ENCODE measurements at regions of chr3 and their contacts with region 1.

Region 1: DNA sequence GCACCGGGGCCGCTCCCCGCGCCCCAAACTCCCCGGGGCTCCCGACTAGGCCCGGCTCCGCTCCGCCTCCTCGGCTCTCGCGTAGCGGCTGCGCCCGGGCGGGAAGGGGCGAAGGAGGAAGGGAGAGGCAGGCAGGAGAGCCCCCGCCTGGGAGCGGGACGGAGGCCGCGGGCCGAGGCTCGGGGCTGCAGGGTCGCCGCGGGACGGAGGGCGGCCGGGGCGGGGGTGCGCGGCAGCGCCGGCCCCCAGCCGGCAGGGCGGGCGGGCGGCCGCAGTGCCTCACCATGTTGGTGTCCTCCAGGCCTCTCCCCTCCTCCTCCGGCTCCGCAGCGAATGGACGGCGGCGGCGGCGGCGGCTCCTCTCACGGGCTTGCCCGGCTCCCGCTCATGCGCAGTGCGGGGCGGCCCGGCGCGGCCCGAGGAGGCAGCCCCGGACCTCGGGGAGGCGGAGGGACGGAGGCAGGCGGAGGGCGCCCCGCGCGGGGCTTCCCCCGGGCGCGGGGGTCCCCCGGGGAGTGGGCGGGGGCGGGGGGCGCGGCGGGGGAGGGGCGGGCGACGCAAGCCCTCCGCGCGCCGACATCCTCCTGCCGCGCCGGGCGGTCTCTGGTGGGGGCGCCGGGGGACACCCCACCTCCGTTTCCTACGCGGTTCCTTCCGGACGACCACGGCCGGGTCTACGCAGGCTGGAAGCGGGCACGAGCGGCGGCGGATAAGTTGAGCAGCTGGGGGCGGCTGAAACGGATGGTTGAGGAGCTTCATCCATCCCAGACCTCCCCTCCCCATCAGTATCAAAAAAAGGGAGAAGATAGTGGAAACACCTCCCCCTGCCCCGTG is at the start of gene DCUN1D1:
- DNase-seq: peak; percentile 83
- H3K4me3 ChIP-seq: peak within 1 kb of the TSS; percentile 93 to 96
- H3K27ac ChIP-seq: peak within 1 kb of the TSS; percentile 86
- H3K4me1 ChIP-seq: no peaks in the 10 kb centered on the region
- H3K27me3 ChIP-seq: no peaks in the 10 kb centered on the region
- CTCF ChIP-seq: no peak
- POLR2A ChIP-seq: peak; percentile 61
- total RNA-seq, gene DCUN1D1: 25.5 to 25.6 TPM

Region 2: DNA sequence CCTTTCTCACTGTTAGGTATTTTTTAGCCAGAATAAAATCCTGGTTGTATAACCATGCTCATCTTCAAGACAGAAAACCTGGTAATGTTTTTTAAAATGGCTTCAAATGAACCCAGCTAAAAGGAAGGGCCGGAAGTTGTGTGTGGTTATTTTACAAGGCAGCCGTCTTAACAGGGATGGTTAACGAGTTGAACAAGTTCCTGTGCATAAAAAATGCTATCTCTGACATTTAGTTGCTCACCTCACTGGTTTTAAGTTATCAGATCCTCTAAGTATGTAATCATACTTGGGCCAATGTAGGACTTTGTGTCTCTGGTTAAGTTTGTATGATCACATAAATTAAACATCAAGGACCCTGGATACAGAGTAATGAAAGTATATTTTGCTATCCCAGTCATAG is 185.0 kb before region 1 on chr3:
- intact Hi-C with region 1: loop called (anchors 5 kb)
- DNase-seq: peak; percentile 76
- H3K4me3 ChIP-seq: peak overlapping the region in 1 of 2 donors; percentile 83
- H3K27ac ChIP-seq: peak overlapping the region; percentile 94 to 97
- H3K4me1 ChIP-seq: peaks cover 5% of the 10 kb centered on the region
- H3K27me3 ChIP-seq: no peaks in the 10 kb centered on the region
- CTCF ChIP-seq: no peak
- POLR2A ChIP-seq: no peak